ENCODE measurements at regions of chr14 and their contacts with region 1.

Region 1: GRCh38 chr14:99683619-99684355 is at the start of gene CYP46A1:
- DNase-seq: peak; percentile 99 to 100 (median 99)
- H3K4me3 ChIP-seq: peak within 1 kb of the TSS; percentile 81
- H3K4me3 Mint-ChIP-seq: peak within 1 kb of the TSS; percentile 90 to 96 (median 95)
- H3K27ac ChIP-seq: peak within 1 kb of the TSS; percentile 74
- H3K27ac Mint-ChIP-seq: peak within 1 kb of the TSS; percentile 85 to 96 (median 92)
- H3K4me1 ChIP-seq: peaks cover 19% of the 10 kb centered on the region
- H3K4me1 Mint-ChIP-seq: peaks cover 9 to 21% (median 12%) of the 10 kb centered on the region in 3 donors
- H3K27me3 ChIP-seq: peaks cover 10% of the 10 kb centered on the region
- H3K27me3 Mint-ChIP-seq: peaks cover 7 to 12% of the 10 kb centered on the region in 2 donors
- total RNA-seq, gene CYP46A1: 0.07 to 0.20 TPM

Region 2: DNA sequence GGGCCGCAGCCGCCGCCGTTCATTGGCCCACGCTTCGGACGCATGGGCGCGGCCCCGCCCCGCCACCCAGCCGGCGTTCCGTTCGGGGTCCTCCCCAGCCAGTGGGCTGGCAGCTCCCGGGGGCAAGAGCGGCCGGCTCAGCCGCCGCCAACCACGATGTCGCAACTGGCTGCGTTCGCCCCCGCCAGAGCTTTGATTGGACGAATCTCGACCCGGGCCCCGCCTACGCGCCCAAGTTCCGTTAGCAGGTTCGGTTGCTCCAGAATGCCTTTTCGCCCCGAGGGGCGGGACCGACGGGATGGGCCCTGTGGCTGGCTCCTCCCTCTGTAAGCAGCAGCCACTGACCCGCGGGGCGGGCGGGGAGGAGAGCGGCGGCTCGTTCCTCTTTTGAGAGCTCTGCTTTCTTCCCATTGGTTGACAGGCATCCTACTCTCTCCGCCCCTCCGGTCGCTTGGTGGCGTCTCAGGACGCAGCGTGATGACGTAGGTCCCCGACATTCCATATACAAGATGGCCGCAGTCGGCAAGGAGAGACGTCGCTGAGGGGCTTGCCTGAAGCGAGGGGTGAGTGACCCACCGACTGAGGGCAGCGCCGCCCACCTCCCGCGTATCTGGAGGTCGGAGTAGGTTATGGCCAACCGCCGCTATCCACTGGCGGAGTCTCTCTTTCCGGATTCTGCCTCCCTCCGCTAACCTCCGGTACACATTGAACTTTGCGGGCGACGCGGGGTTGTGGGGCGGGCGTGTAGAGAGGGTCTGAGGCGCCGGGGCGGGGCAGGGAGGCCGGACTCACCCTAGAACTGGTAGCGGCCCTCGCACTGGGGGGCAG is 202.7 kb before region 1 on chr14 and contains the start of gene CCNK:
- CTCF ChIA-PET with region 1: no interaction called
- POLR2A ChIA-PET with region 1: interaction called, 10 read pairs
- DNase-seq: peak; percentile 100
- H3K4me3 ChIP-seq: peak within 1 kb of the TSS; percentile 91
- H3K4me3 Mint-ChIP-seq: peak within 1 kb of the TSS; percentile 97 to 100 (median 98)
- H3K27ac ChIP-seq: peak within 1 kb of the TSS; percentile 97
- H3K27ac Mint-ChIP-seq: peak within 1 kb of the TSS; percentile 95 to 99 (median 98)
- H3K4me1 ChIP-seq: peaks cover 41% of the 10 kb centered on the region
- H3K4me1 Mint-ChIP-seq: peaks cover 58 to 80% (median 70%) of the 10 kb centered on the region in 3 donors
- H3K27me3 ChIP-seq: no peaks in the 10 kb centered on the region
- H3K27me3 Mint-ChIP-seq: peaks cover 0 to 4% of the 10 kb centered on the region in 2 donors
- total RNA-seq, gene CCNK: 110 to 115 TPM

Region 3: GRCh38 chr14:99604283-99604765 is 79.5 kb before region 1 on chr14:
- CTCF ChIA-PET with region 1: interaction called, 5 read pairs
- POLR2A ChIA-PET with region 1: interaction called, 14 read pairs
- DNase-seq: peak; percentile 92 to 98 (median 96)
- H3K4me3 ChIP-seq: peak overlapping the region; percentile 66
- H3K4me3 Mint-ChIP-seq: peak overlapping the region; percentile 75 to 96 (median 91)
- H3K27ac ChIP-seq: peak overlapping the region; percentile 74
- H3K27ac Mint-ChIP-seq: peak overlapping the region; percentile 41 to 94 (median 90)
- H3K4me1 ChIP-seq: peaks cover 31% of the 10 kb centered on the region
- H3K4me1 Mint-ChIP-seq: peaks cover 30 to 38% (median 32%) of the 10 kb centered on the region in 3 donors
- H3K27me3 ChIP-seq: no peaks in the 10 kb centered on the region
- H3K27me3 Mint-ChIP-seq: no peaks in the 10 kb centered on the region

Region 4: DNA sequence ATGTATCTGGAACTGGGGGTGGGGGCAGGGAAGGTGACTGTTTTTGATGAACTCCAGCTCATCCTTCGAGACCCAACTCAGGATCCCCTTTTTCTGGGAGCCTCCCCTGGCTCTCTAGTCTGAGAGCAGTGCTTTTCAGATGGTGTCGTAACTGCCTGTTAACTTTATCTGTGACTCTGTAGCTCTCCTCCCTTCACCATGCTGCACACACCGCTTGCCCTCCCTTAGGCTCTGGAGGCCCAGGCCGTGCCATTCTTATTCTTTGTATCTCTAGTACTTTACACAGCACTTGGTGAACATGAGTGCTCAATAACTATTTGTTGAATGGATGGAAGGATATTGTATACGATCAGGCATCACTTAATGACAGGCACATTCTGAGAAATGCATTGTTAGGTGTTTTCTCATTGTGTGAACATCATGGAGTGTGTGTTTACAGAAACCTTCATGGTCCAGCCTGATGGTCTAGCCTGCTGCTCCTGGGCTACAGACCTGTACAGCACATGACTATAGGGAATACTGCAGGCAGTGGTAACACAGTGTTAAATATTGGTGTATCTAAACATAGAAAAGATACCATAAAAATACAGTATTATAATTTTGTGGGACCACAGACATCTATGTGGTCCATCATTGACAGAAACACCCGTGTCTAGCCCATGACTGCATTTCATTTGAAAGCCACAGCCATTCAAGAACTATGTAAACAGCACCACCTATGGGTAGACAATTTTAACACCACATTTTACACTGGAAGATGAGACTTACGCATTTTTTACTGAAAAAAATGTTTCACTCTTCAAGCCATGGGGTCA is 201.3 kb after region 1 on chr14:
- CTCF ChIA-PET with region 1: interaction called, 11 read pairs
- POLR2A ChIA-PET with region 1: no interaction called
- DNase-seq: peak in 2 of 5 donors; percentile 47 to 50
- H3K4me3 ChIP-seq: no peak overlapping the region
- H3K4me3 Mint-ChIP-seq: no peak overlapping the region
- H3K27ac ChIP-seq: no peak overlapping the region
- H3K27ac Mint-ChIP-seq: no peak overlapping the region
- H3K4me1 ChIP-seq: no peaks in the 10 kb centered on the region
- H3K4me1 Mint-ChIP-seq: no peaks in the 10 kb centered on the region
- H3K27me3 ChIP-seq: no peaks in the 10 kb centered on the region
- H3K27me3 Mint-ChIP-seq: peaks cover 7 to 8% of the 10 kb centered on the region in 2 donors